Tibial artery (tissue), 4 donors: ENCODE measurements at regions of chr1 and their contacts with region 1.

Region 1: DNA sequence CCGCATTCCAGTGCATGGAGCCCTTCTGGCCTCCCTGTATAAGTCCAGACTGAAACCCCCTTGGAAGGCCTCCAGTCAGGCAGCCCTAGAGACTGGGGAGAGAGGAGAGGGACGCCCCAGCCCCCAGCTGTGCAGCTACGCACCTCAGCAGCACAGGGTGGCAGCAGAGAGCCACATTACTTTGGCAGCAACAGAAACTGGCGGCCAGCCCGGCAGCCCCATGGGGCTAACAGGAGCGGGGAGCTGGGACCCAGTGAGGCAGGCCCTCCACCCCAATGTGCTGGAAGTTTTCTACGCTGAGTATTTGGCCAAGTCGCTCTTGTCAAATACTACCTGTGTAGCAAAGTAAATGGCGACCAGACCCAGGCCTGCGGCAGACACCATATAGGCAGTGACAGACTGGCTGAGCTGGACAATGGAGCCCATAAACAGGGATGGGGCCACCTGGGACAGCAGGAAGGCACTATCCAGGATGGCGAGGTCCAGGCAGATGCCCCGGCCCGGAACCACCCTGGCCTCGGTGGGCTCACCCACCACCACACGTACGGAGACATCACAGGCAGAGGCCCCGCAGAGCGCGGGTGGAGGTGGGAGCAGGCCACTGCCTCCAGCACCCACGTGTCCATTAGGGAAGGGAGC is 21.2 kb downstream of the SLC45A3 start:
- DNase-seq: peak; percentile 77 to 86
- H3K4me3 ChIP-seq: no peak overlapping the region
- H3K27ac ChIP-seq: no peak overlapping the region
- H3K4me1 ChIP-seq: peaks cover 0 to 7% (median 2%) of the 10 kb centered on the region in 4 donors
- H3K27me3 ChIP-seq: no peaks in the 10 kb centered on the region
- CTCF ChIP-seq: peak; percentile 86 to 92

Region 2: DNA sequence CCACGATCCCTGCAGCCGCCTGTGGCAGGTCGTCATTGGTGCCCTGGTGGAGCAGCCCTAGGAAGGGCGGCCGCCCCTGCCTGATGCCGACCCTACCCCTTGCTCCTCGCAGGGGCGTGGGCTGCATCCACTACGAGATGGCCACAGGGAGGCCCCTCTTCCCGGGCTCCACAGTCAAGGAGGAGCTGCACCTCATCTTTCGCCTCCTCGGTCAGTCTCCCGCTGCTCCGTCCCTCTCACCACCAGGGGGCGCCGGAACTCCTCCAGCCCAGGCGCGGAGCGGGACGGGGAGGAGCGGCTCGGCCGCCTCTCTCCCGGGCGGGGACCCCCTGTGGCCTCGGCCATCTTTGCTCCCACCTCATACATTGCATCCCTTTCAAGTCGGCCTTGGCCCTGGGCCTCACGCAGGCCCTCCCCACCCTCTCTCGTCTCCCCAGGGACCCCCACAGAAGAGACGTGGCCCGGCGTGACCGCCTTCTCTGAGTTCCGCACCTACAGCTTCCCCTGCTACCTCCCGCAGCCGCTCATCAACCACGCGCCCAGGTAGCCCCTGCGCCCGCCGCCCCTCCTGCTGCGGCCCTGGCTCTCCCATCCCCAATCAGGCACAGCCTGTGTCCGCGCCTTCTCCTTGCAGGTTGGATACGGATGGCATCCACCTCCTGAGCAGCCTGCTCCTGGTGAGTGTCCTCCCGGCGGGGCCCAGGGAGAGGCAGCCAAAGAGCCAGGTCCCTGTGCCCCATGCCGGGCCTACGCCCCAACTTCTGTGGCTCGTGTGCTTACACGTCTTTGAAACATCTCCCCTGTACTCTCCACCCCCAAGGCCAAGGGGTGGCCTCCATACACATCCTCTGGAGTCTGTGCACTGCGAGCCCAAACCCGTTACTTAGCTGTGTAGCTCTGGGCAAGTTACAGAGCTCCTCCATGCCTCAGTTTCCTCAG is 129.9 kb before region 1 on chr1:
- intact Hi-C with region 1: loop called (anchors 5 kb)
- DNase-seq: peak; percentile 71 to 82
- H3K4me3 ChIP-seq: peak overlapping the region in 1 of 2 donors; percentile 8
- H3K27ac ChIP-seq: no peak overlapping the region
- H3K4me1 ChIP-seq: peaks cover 0 to 5% (median 2%) of the 10 kb centered on the region in 4 donors
- H3K27me3 ChIP-seq: no peaks in the 10 kb centered on the region
- CTCF ChIP-seq: peak; percentile 81 to 95

Region 3: GRCh38 chr1:205591522-205592351 is 67.3 kb before region 1 on chr1:
- intact Hi-C with region 1: loop called (anchors 2 kb)
- DNase-seq: peak; percentile 87 to 90
- H3K4me3 ChIP-seq: peak overlapping the region; percentile 34 to 46
- H3K27ac ChIP-seq: no peak overlapping the region
- H3K4me1 ChIP-seq: peaks cover 0 to 9% (median 3%) of the 10 kb centered on the region in 4 donors
- H3K27me3 ChIP-seq: no peaks in the 10 kb centered on the region
- CTCF ChIP-seq: peak; percentile 98 to 99

Region 4: DNA sequence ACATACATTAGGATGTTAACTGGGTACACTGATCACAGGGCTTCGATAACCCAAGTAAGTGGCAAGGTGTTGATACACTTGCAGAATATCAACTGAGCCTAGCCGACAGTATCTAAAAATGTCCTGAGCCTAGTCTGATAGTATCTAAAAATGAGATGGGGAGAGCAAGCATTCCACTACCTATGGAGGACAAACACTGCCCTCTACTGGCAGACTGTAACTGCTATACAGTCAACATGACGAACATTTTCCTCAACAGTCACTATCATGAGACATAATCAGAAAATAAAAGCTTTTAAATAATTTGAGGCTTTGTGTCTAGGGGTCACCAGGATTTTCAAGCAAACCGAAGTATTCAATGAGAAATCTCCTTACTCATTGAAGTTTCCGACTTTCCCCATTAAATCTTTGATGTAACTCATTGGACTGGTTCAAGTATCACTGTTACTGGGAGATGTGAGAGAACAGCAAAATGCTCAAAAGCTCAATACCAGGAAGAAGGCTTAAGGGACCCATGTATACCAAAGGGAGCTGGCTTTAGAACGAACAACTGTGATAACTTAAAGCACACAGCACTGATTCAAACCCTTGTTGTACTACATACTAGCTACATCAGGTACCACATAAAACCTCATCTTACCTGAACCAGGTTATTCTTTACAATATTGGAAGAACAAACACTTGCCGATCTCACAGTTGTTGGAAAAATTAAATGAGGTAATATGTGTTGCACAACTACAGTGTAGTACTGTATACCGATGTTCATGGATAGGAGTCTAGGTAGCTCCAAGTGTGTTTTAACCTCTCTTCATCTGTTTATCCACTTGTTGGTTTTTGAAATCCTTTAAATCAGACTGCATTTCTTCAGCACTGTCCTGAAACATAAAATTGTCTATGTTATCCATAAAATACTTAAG is 52.3 kb after region 1 on chr1:
- intact Hi-C with region 1: loop called (anchors 2 kb)
- DNase-seq: peak in 1 of 2 donors; percentile 65
- H3K4me3 ChIP-seq: no peak overlapping the region
- H3K27ac ChIP-seq: peak overlapping the region in 1 of 2 donors; percentile 34
- H3K4me1 ChIP-seq: peaks cover 0 to 19% (median 5%) of the 10 kb centered on the region in 4 donors
- H3K27me3 ChIP-seq: no peaks in the 10 kb centered on the region
- CTCF ChIP-seq: peak; percentile 82 to 86